Activated B cell treated with CpG ODN at 0.5 μM for 24 hours (primary cell): ENCODE measurements at regions of chr6 and their contacts with region 1.

Region 1: DNA sequence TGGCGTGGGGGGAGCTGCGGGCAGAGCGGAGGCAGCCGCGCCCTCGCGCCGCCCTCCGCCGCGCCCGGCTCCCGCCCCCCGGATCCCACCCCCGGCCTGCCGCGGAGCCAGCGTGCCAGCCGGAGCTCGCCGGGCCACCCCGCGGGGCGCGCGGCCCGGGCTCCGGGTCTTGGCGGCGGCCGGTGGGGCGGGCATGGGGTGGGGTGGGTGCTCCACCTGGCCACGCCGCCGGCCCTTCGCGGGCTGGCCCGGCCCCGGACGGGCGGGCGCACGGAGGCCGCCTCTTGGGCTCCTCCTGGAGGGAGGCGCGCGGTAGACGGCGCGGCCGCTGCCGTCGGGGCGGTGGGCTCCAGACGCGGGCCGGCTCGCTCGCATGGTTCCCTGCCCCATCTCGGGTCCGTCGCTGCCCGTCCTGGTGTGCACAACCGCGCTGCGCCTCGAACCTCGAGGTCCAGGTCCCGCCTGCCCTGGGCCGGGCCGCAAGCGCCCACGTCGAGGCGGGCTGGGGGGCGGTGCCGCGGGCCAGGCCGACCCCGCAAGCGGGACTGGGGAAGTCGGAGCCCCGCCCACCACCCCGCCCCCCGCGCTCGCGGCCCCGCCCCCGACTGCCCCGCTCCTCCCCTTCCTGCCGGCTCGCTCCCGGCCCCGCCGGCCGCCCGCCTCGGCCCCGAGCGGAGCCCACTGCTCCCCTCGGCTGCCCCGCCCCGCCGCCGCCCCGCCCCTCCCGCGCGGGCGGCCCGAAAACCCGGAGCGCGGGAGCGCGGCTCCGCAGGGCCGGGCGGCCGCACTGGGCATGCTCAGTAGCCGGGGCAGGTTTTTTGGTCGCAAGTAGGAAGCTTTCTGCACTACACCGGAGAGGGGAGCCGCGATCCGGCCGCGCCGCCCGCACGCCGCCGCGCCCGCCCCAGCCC is at the start of gene CDYL:
- DNase-seq: peak; percentile 96
- ATAC-seq: peak; percentile 77
- H3K4me3 Mint-ChIP-seq: peak within 1 kb of the TSS; percentile 90
- H3K27ac Mint-ChIP-seq: peak within 1 kb of the TSS; percentile 85
- H3K4me1 Mint-ChIP-seq: peaks cover 46% of the 10 kb centered on the region
- H3K27me3 Mint-ChIP-seq: no peaks in the 10 kb centered on the region
- CTCF ChIP-seq: no peak
- total RNA-seq, gene CDYL: 47.5 and 49.8 TPM in 2 replicates

Region 2: GRCh38 chr6:3751730-3752542 is 1023.9 kb before region 1 on chr6:
- CTCF ChIA-PET with region 1: no interaction called
- POLR2A ChIA-PET with region 1: no interaction called
- intact Hi-C with region 1: loop called (anchors 5 kb)
- DNase-seq: peak; percentile 72
- ATAC-seq: peak; percentile 73
- H3K4me3 Mint-ChIP-seq: peak overlapping the region; percentile 72
- H3K27ac Mint-ChIP-seq: no peak overlapping the region
- H3K4me1 Mint-ChIP-seq: peaks cover 52% of the 10 kb centered on the region
- H3K27me3 Mint-ChIP-seq: no peaks in the 10 kb centered on the region
- CTCF ChIP-seq: no peak

Region 3: GRCh38 chr6:4135665-4136353 is 640.0 kb before region 1 on chr6:
- CTCF ChIA-PET with region 1: no interaction called
- POLR2A ChIA-PET with region 1: interaction called, 5 read pairs
- intact Hi-C with region 1: loop called (anchors 5 kb)
- DNase-seq: peak; percentile 83
- ATAC-seq: peak; percentile 92
- H3K4me3 Mint-ChIP-seq: peak overlapping the region; percentile 85
- H3K27ac Mint-ChIP-seq: peak overlapping the region; percentile 76
- H3K4me1 Mint-ChIP-seq: peaks cover 27% of the 10 kb centered on the region
- H3K27me3 Mint-ChIP-seq: no peaks in the 10 kb centered on the region
- CTCF ChIP-seq: no peak

Region 4: DNA sequence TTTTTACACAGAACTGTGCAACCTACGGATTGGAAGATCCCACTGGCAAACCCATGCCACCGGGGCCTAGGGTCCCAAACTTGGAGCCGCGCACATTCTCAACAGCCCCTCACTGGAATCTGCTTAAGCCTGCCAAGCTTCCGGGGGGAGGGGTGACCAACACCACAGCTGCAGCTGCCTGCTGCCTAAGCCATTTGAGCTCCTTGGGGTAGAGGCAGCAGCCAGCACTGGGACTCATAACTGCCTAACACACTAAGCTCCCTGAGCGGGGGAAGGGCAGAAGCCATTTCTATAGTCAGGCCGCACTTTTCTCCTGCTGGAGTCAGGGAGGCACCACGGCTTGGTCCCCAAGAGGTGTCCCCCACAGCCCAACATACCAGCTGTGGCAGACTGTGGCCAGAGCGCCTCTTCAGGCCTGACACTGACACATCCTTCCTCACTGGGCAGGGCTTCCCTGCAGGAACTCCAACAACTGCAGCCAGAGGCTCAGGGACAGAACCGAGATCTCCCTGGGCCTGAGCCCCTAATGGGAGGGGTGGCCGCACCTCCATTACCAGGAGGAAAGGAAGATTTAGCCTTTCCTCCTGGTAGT is 370.1 kb before region 1 on chr6:
- CTCF ChIA-PET with region 1: no interaction called
- POLR2A ChIA-PET with region 1: no interaction called
- intact Hi-C with region 1: loop called (anchors 2 kb)
- DNase-seq: no peak
- ATAC-seq: no peak
- H3K4me3 Mint-ChIP-seq: no peak overlapping the region
- H3K27ac Mint-ChIP-seq: no peak overlapping the region
- H3K4me1 Mint-ChIP-seq: peaks cover 46% of the 10 kb centered on the region
- H3K27me3 Mint-ChIP-seq: peaks cover 7% of the 10 kb centered on the region
- CTCF ChIP-seq: no peak

Region 5: GRCh38 chr6:4801491-4802110 is 25.8 kb after region 1 on chr6:
- CTCF ChIA-PET with region 1: interaction called, 6 read pairs
- POLR2A ChIA-PET with region 1: interaction called, 18 read pairs
- intact Hi-C with region 1: loop called (anchors 1 kb)
- DNase-seq: no peak
- ATAC-seq: peak; percentile 69
- H3K4me3 Mint-ChIP-seq: peak overlapping the region; percentile 16
- H3K27ac Mint-ChIP-seq: peak overlapping the region; percentile 46
- H3K4me1 Mint-ChIP-seq: peaks cover 82% of the 10 kb centered on the region
- H3K27me3 Mint-ChIP-seq: no peaks in the 10 kb centered on the region
- CTCF ChIP-seq: no peak

Region 6: DNA sequence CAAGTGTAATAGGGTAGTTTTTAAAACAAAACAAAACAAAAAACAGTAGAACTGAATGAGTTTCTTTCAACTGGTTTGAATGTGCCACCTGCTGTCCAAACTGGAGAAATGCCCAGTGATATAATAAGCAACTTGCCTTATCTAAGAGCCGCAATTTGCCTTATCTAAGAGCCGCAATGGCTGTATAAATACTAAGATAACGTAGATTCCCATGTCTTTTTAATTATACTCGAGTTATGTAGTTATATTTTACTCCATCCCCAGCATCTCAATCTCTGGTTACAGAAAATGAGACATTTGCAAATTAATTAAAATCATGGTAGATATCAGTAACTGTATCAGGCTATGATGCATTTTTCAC is 160.8 kb after region 1 on chr6:
- CTCF ChIA-PET with region 1: no interaction called
- POLR2A ChIA-PET with region 1: no interaction called
- intact Hi-C with region 1: loop called (anchors 5 kb)
- DNase-seq: no peak
- ATAC-seq: peak; percentile 50
- H3K4me3 Mint-ChIP-seq: no peak overlapping the region
- H3K27ac Mint-ChIP-seq: no peak overlapping the region
- H3K4me1 Mint-ChIP-seq: peaks cover 20% of the 10 kb centered on the region
- H3K27me3 Mint-ChIP-seq: no peaks in the 10 kb centered on the region
- CTCF ChIP-seq: no peak

Region 7: DNA sequence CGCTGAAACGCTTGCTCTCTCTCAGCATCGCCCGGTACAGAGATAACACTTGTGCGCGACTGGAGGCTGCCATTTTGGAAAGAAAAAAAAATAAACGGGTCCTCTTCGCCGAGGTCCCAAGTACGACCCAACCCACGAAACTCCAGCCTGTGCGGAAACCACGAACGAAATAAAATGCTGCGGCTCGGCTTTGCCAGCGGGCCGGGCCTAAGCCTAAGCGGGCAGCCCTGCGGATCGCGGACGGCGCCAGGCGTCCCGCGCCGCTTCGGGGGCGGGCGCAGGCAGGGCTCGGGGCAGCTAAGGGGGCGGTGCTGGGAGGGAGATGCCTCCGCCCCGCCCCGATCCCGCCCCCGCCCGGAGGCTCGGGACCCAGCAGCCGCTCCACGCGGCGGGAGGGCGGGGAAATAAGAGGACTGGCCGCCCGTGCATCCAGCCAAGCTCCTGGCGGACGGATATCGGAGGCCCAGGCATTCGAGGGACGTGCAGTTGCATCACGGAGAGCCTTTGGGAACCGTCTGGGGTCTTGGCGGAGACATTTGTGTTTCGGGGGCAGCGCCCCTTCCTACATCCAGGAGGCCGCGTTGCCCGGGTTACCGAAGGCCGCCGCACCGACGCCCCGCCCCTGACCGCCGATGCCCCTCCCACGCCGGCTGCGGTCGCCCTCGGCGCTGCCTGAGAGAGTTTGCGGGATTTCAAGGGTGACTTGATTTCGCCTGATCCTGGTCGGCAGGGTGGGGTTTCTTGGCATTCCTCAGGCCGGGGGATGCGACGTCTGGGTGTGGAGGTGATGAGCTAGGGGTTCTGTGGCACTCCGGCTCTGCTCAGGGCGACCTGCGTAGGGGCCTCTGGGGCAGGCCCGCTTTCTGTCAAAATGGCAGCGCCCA is 485.1 kb after region 1 on chr6 and contains the starts of genes FARS2 and LYRM4:
- CTCF ChIA-PET with region 1: no interaction called
- POLR2A ChIA-PET with region 1: no interaction called
- intact Hi-C with region 1: loop called (anchors 2 kb)
- DNase-seq: peak; percentile 97
- ATAC-seq: peak; percentile 84
- H3K4me3 Mint-ChIP-seq: peak within 1 kb of the TSS; percentile 98
- H3K27ac Mint-ChIP-seq: peak within 1 kb of the TSS; percentile 100
- H3K4me1 Mint-ChIP-seq: peaks cover 27% of the 10 kb centered on the region
- H3K27me3 Mint-ChIP-seq: no peaks in the 10 kb centered on the region
- CTCF ChIP-seq: no peak
- total RNA-seq, gene FARS2: 28.2 and 32.7 TPM in 2 replicates
- total RNA-seq, gene LYRM4: 51.2 and 52.2 TPM in 2 replicates